WTC11 (cell line): ENCODE measurements at regions of chr10 and their contacts with region 1.

Region 1: GRCh38 chr10:110304780-110305421 is at the start of gene SMNDC1:
- DNase-seq: peak; percentile 99
- ATAC-seq: peak; percentile 95
- H3K4me3 Mint-ChIP-seq: peak within 1 kb of the TSS; percentile 95
- H3K27ac Mint-ChIP-seq: peak within 1 kb of the TSS; percentile 99
- H3K4me1 Mint-ChIP-seq: peaks cover 33% of the 10 kb centered on the region
- H3K27me3 Mint-ChIP-seq: no peaks in the 10 kb centered on the region
- CTCF ChIP-seq: no peak
- total RNA-seq, gene SMNDC1: 37.7 to 55.9 TPM (median 40.2 TPM) in 3 replicates

Region 2: GRCh38 chr10:110547139-110547761 is 242.3 kb after region 1 on chr10:
- CTCF ChIA-PET with region 1: interaction called, 18 read pairs
- POLR2A ChIA-PET with region 1: no interaction called
- DNase-seq: no peak
- ATAC-seq: peak; percentile 44; the same call in 1 of the 2 replicates
- H3K4me3 Mint-ChIP-seq: no peak overlapping the region
- H3K27ac Mint-ChIP-seq: no peak overlapping the region
- H3K4me1 Mint-ChIP-seq: peaks cover 11% of the 10 kb centered on the region
- H3K27me3 Mint-ChIP-seq: no peaks in the 10 kb centered on the region; the same call in 1 of the 2 replicates
- CTCF ChIP-seq: peak; percentile 75

Region 3: DNA sequence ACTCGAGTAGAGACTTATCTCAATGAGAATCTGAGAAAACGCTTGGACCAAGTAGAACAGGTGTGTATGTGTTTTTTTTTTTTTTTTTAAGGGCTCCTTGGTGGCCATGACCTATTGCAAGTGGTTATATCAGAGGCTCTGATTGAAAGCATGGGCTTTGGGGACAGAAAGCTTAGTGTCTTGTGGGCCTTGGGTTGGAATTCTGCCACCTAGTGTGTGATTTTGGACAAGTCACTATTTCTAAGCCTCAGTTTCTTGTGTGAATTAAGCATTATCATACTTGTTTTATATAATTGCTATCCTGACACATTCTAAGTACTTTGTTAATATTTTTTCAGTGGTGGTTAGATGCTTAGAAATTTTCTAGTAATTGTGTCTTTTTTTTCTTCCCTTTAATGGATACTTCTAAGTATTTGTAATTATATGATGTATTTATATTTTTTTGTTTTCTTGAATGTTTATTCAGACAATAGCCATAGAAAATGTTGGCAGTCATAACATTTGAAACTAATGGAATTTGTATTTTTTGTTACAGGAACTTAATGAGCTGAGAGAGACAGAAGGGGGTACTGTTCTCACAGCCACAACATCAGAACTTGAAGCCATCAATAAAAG is 295.7 kb after region 1 on chr10:
- CTCF ChIA-PET with region 1: interaction called, 12 read pairs
- POLR2A ChIA-PET with region 1: interaction called, 4 read pairs
- DNase-seq: no peak
- ATAC-seq: peak; percentile 86
- H3K4me3 Mint-ChIP-seq: no peak overlapping the region
- H3K27ac Mint-ChIP-seq: no peak overlapping the region
- H3K4me1 Mint-ChIP-seq: no peaks in the 10 kb centered on the region
- H3K27me3 Mint-ChIP-seq: no peaks in the 10 kb centered on the region
- CTCF ChIP-seq: peak; percentile 34; the same call in 1 of the 2 replicates

Region 4: GRCh38 chr10:110671788-110672579 is 367.1 kb after region 1 on chr10:
- CTCF ChIA-PET with region 1: interaction called, 10 read pairs
- POLR2A ChIA-PET with region 1: no interaction called
- DNase-seq: peak; percentile 80
- ATAC-seq: peak; percentile 85
- H3K4me3 Mint-ChIP-seq: peak overlapping the region; percentile 66
- H3K27ac Mint-ChIP-seq: no peak overlapping the region
- H3K4me1 Mint-ChIP-seq: peaks cover 26% of the 10 kb centered on the region
- H3K27me3 Mint-ChIP-seq: peaks cover 77% of the 10 kb centered on the region
- CTCF ChIP-seq: peak; percentile 34; the same call in 1 of the 2 replicates